ENCODE measurements at regions of chr18 and their contacts with region 1.

Region 1: GRCh38 chr18:70288851-70289328 is at the start of gene SOCS6:
- H3K4me3 Mint-ChIP-seq: peak within 1 kb of the TSS; percentile 77
- H3K27ac Mint-ChIP-seq: peak within 1 kb of the TSS; percentile 79
- H3K4me1 Mint-ChIP-seq: peaks cover 67% of the 10 kb centered on the region
- H3K27me3 Mint-ChIP-seq: no peaks in the 10 kb centered on the region

Region 2: GRCh38 chr18:70205421-70206397 is 83.2 kb before region 1 on chr18 and contains the start of gene RTTN:
- intact Hi-C with region 1: loop called (anchors 1 kb)
- H3K4me3 Mint-ChIP-seq: peak within 1 kb of the TSS; percentile 90
- H3K27ac Mint-ChIP-seq: peak within 1 kb of the TSS; percentile 97
- H3K4me1 Mint-ChIP-seq: peaks cover 17% of the 10 kb centered on the region
- H3K27me3 Mint-ChIP-seq: no peaks in the 10 kb centered on the region

Region 3: GRCh38 chr18:70228546-70228945 is 60.3 kb before region 1 on chr18:
- intact Hi-C with region 1: loop called (anchors 5 kb)
- H3K4me3 Mint-ChIP-seq: no peak overlapping the region
- H3K27ac Mint-ChIP-seq: peak overlapping the region; percentile 55
- H3K4me1 Mint-ChIP-seq: peaks cover 13% of the 10 kb centered on the region
- H3K27me3 Mint-ChIP-seq: peaks cover 17% of the 10 kb centered on the region

Region 4: DNA sequence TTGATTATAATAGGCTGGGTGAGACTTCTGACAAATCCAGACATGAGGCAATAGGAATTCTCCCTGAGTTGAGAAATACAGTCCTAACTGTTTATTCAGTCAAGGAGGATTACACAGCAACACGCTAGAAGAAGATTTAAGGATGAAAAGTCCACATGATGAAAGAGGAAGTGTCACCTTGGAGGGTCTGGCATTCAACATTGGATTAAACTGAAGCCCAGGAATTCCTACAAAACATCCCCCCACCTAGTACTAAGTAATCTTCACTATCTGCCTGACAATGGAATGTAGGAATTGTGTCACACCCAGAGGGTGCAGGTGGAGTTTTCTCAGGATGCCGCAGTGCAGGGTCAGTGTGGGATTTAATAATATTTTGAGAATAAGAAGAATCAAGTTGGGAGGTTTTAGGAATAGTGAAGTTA is 142.3 kb after region 1 on chr18:
- intact Hi-C with region 1: loop called (anchors 5 kb)
- H3K4me3 Mint-ChIP-seq: no peak overlapping the region
- H3K27ac Mint-ChIP-seq: no peak overlapping the region
- H3K4me1 Mint-ChIP-seq: peaks cover 24% of the 10 kb centered on the region
- H3K27me3 Mint-ChIP-seq: peaks cover 4% of the 10 kb centered on the region